Breast epithelium (tissue), 4 donors: ENCODE measurements at regions of chr4 and their contacts with region 1.

Region 1: DNA sequence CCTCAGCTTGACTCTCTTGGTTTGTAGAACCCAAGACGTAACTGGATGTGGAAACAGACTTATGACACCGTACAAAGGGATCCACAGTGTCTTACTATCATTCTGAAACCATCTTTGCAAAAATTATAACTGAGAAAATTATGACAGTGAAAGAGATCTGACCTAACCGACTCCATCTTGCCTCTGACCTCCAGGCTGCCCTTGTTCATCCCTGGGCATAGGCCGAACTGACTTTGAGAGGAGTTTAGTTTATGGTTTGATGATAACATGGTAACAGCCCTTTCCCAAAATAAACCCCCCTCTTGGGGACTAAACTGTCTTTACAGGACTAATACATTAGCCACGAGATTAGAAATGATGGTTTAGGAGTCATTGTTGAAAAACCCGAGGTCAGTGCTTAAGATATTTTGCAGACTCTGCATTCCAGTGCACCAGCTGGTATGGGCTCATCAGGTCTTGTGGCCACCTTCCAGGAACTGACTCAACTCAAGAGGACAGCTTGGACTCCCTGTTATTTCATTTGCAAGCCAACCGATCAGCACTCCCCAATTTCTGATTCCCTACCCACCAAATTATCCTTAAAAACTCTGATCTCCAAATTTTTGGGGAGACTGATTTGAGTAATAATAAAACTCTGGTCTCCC is 49.6 kb downstream of the CASP3 start:
- DNase-seq: no peak
- H3K4me3 ChIP-seq: no peak overlapping the region
- H3K27ac ChIP-seq: no peak overlapping the region
- H3K4me1 ChIP-seq: no peaks in the 10 kb centered on the region
- H3K27me3 ChIP-seq: no peaks in the 10 kb centered on the region
- CTCF ChIP-seq: no peak
- POLR2A ChIP-seq: no peak

Region 2: GRCh38 chr4:184583738-184584502 is 15.7 kb before region 1 on chr4:
- intact Hi-C with region 1: loop called (anchors 1 kb)
- DNase-seq: no peak
- H3K4me3 ChIP-seq: no peak overlapping the region
- H3K27ac ChIP-seq: no peak overlapping the region
- H3K4me1 ChIP-seq: no peaks in the 10 kb centered on the region
- H3K27me3 ChIP-seq: no peaks in the 10 kb centered on the region
- CTCF ChIP-seq: no peak
- POLR2A ChIP-seq: no peak

Region 3: GRCh38 chr4:184617561-184618196 is 18.1 kb after region 1 on chr4:
- intact Hi-C with region 1: loop called (anchors 1 kb)
- DNase-seq: no peak
- H3K4me3 ChIP-seq: no peak overlapping the region
- H3K27ac ChIP-seq: no peak overlapping the region
- H3K4me1 ChIP-seq: no peaks in the 10 kb centered on the region
- H3K27me3 ChIP-seq: no peaks in the 10 kb centered on the region
- CTCF ChIP-seq: no peak
- POLR2A ChIP-seq: no peak